ENCODE measurements at regions of chrX and their contacts with region 1.

Region 1: GRCh38 chrX:13658602-13659001 is 5.7 kb downstream of the TCEANC start:
- DNase-seq: no peak
- ATAC-seq: peak; percentile 75
- H3K4me3 ChIP-seq: no peak overlapping the region
- H3K27ac ChIP-seq: no peak overlapping the region
- H3K4me1 ChIP-seq: no peaks in the 10 kb centered on the region
- H3K27me3 ChIP-seq: no peaks in the 10 kb centered on the region

Region 2: DNA sequence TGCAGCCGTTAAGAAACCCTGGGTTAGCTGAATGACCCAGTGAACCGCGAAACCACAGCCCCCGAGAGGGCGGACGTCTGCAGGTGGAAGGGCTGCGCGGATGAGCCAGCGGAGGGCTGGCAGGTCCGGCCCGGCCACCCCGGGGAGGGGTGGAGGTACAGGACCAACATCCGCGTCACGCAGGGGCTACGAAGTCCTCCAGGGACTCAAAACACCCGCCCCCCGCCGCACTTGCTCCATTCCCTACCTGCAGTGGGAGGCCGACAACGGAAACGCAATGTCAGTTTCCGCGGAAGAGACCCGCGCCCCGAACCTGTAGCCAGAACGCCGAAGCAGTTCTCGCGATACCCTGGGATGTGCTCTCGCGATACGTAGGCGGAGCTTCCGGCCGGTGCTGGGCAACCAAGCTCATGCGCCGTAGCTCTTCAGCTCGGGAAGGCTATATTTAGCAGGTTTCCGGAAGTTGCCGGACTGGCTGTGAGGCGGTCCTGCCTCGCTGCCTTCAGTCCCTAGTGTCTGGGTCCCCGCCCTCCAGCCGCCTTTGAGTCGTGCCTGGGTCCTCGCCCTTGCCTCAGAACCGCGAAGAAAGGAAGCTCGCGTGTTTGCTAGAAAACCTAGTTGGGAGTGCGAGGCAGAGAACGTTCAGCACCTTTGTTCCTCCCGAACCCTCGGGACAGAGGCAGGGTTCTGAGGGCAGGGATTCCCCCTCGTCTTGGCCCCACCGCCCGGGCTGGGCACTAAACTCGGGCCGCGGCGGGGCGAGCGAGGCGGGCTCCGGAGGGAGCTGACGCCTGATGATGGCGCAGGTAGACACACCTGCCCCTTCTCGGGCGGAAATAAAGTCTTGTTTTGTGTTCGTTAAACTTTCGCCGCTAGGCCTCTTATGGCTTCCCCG is 75.9 kb after region 1 on chrX and contains the starts of genes OFD1 and TRAPPC2:
- intact Hi-C with region 1: loop called (anchors 1 to 5 kb)
- DNase-seq: peak; percentile 96 to 98
- ATAC-seq: peak; percentile 99
- H3K4me3 ChIP-seq: peak within 1 kb of the TSS; percentile 83 to 90
- H3K27ac ChIP-seq: peak within 1 kb of the TSS in 1 of 2 donors; percentile 58
- H3K4me1 ChIP-seq: no peaks in the 10 kb centered on the region
- H3K27me3 ChIP-seq: no peaks in the 10 kb centered on the region
- total RNA-seq, gene OFD1: 23.8 to 34.6 TPM
- total RNA-seq, gene TRAPPC2: 17.4 to 18.5 TPM

Region 3: DNA sequence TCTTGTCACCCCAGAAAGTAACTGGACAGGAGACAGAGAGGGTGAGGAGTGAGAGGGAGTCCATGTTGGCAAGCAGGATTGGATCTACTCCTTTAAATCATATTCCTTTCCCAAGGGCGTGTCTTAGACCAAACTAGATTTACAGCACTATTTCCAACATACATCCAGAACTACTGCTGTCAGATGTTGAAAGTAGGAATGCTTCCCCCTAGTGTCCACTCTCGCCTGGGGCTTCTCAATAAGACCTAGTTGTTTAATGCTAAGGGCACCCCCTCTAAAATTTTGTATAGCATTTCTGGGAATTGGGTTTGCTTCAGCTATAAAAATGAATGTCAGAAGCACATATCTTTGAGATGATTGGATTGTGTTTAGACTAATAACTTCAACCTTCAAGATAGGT is 89.2 kb after region 1 on chrX:
- intact Hi-C with region 1: loop called (anchors 5 kb)
- DNase-seq: no peak
- ATAC-seq: no peak
- H3K4me3 ChIP-seq: no peak overlapping the region
- H3K27ac ChIP-seq: no peak overlapping the region
- H3K4me1 ChIP-seq: no peaks in the 10 kb centered on the region
- H3K27me3 ChIP-seq: no peaks in the 10 kb centered on the region

Region 4: GRCh38 chrX:13898083-13898482 is 239.5 kb after region 1 on chrX:
- intact Hi-C with region 1: loop called in 1 of 2 experiments (anchors 5 kb)
- DNase-seq: no peak
- ATAC-seq: no peak
- H3K4me3 ChIP-seq: no peak overlapping the region
- H3K27ac ChIP-seq: no peak overlapping the region
- H3K4me1 ChIP-seq: peaks cover 2 to 7% of the 10 kb centered on the region in 2 donors
- H3K27me3 ChIP-seq: no peaks in the 10 kb centered on the region